Stomach (tissue), 19 donors: ENCODE measurements at regions of chr21 and their contacts with region 1.

Region 1: DNA sequence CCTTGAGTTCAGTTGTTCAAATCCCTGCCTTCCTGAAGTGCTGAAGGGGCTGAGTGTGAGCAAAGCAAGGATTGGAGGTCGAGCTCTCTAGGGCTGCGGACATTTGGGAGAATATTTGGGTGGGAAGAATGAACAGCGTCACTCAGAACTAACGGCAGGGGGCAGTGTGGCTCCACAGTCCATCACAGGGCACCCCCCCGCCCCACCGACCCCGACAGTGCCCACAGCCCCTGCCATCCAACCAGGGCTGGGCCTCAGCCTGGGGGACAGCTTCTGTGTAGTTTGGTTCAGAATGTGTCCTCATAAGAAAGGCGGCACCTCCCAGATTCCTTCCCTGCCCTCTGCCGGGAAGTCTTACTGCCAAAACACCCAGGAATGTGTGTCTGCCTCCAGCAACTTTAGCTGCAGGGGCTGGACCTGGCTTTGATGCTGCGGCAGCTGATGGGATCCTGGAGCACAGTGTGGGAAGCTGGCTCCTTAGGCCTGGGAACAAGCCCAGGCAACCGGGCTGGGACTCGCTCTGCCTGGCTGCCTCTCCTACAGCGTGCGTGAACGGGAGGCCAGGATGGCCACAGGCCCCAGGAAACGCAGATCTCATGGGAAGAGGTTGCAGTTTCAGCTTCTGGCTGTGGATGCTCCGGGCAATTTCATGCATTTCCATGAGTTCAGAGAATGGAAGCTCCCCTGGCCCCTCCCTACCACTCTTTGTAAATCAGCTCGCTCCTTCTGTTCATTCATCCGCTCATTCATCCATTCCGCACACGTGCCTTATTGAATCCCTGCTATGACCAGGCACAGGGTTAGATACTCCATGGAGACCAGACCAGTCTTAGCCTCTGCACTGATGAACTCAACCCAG is 104.9 kb upstream of the TMPRSS2 start:
- DNase-seq: peak; percentile 65 to 89
- H3K4me3 ChIP-seq: peak overlapping the region in 1 of 4 donors; percentile 4
- H3K27ac ChIP-seq: peak overlapping the region; percentile 29 to 78 (median 60)
- H3K4me1 ChIP-seq: peaks cover 14 to 49% (median 19%) of the 10 kb centered on the region in 4 donors
- H3K27me3 ChIP-seq: peaks cover 0 to 5% (median 0%) of the 10 kb centered on the region in 3 donors
- CTCF ChIP-seq: peak in 5 of 7 experiments; percentile 57 to 75 (median 64)
- EP300 ChIP-seq: peak; percentile 48
- POLR2A ChIP-seq: no peak

Region 2: GRCh38 chr21:41750048-41750447 is 137.1 kb after region 1 on chr21:
- intact Hi-C with region 1: no loop called
- DNase-seq: no peak
- H3K4me3 ChIP-seq: no peak overlapping the region
- H3K27ac ChIP-seq: no peak overlapping the region
- H3K4me1 ChIP-seq: peaks cover 15 to 59% (median 37%) of the 10 kb centered on the region in 4 donors
- H3K27me3 ChIP-seq: peaks cover 0 to 21% (median 0%) of the 10 kb centered on the region in 3 donors
- CTCF ChIP-seq: no peak
- EP300 ChIP-seq: no peak
- POLR2A ChIP-seq: no peak

Region 3: GRCh38 chr21:41774467-41775148 is 161.7 kb after region 1 on chr21:
- intact Hi-C with region 1: loop called (anchors 5 kb)
- DNase-seq: no peak
- H3K4me3 ChIP-seq: no peak overlapping the region
- H3K27ac ChIP-seq: no peak overlapping the region
- H3K4me1 ChIP-seq: peaks cover 17 to 20% (median 19%) of the 10 kb centered on the region in 4 donors
- H3K27me3 ChIP-seq: peaks cover 5 to 76% (median 33%) of the 10 kb centered on the region in 3 donors
- CTCF ChIP-seq: no peak
- EP300 ChIP-seq: no peak
- POLR2A ChIP-seq: no peak